Caco-2 (cell line): ENCODE measurements at regions of chr2 and their contacts with region 1.

Region 1: DNA sequence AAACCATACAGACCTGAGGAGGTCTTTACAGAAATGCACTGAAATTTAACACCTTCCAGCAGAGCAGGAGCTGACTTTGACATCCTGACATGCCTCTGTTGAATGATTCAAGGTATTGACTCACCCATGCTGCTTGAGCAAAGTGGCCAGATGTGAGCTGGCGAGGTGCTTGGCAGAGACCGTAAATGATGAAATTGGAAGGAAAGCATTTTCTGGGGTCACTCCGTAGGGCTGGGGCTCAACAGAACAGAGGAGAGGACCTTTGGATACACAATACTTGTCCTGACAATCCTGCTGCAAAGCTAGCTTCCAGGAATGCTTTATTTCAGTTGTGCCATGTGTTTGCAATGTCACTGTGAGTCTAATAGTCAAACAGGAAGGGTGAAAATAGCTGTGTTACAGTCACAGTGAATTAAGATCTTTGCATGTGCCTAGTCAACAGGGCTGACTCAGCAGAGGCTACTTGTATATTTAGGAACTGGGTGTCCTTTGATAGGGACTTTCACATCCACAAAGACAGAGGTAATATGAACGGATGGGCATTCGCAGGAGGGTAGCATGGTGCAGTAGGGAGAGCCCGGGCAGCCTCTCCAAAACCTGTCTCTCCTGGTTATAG is 31.6 kb upstream of the NCK2 start:
- DNase-seq: peak in 1 of 2 experiments; percentile 18
- H3K4me3 ChIP-seq: no peak overlapping the region
- H3K4me3 Mint-ChIP-seq: peak overlapping the region; percentile 36
- H3K27ac Mint-ChIP-seq: peak overlapping the region; percentile 75
- H3K4me1 ChIP-seq: peaks cover 49% of the 10 kb centered on the region
- H3K4me1 Mint-ChIP-seq: peaks cover 61% of the 10 kb centered on the region
- H3K27me3 ChIP-seq: no peaks in the 10 kb centered on the region
- H3K27me3 Mint-ChIP-seq: no peaks in the 10 kb centered on the region
- CTCF ChIP-seq: no peak

Region 2: DNA sequence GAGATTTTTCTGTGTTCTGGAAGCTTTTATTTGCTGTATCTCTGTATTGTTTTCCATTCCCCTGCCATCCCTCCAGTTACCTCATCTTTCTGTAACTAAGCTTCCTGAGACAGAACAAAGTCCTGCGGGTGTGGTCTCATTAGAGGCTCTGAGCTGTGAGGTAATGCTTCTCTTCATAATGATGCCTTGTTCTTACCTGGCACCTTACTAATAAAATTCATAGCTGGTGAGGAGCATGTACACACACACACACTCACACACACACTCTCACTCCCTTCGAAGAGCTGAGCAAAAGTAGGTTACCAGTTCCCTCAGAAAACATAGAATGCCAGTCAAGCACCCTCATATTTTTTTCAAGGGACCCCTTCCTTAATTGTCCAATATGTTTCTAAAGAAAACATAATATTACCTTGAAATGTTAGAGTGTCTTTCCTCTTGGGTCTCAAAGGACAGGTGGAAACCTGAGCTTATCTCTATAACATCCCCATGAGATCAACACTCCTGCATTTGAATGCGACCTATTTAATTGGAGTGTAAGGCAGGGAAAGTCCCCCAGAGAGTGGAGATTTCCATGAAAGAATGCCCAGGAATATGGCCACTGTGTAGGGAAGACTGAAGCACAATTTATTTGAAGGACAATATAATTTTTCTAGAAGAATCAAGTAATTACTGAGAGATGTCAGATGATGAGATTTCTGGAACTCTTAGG is 130.0 kb before region 1 on chr2:
- CTCF ChIA-PET with region 1: no interaction called
- POLR2A ChIA-PET with region 1: no interaction called
- intact Hi-C with region 1: loop called (anchors 2 kb)
- DNase-seq: peak; percentile 32 to 58
- H3K4me3 ChIP-seq: no peak overlapping the region
- H3K4me3 Mint-ChIP-seq: no peak overlapping the region
- H3K27ac Mint-ChIP-seq: peak overlapping the region; percentile 61
- H3K4me1 ChIP-seq: peaks cover 42% of the 10 kb centered on the region
- H3K4me1 Mint-ChIP-seq: peaks cover 30% of the 10 kb centered on the region
- H3K27me3 ChIP-seq: no peaks in the 10 kb centered on the region
- H3K27me3 Mint-ChIP-seq: no peaks in the 10 kb centered on the region
- CTCF ChIP-seq: no peak

Region 3: DNA sequence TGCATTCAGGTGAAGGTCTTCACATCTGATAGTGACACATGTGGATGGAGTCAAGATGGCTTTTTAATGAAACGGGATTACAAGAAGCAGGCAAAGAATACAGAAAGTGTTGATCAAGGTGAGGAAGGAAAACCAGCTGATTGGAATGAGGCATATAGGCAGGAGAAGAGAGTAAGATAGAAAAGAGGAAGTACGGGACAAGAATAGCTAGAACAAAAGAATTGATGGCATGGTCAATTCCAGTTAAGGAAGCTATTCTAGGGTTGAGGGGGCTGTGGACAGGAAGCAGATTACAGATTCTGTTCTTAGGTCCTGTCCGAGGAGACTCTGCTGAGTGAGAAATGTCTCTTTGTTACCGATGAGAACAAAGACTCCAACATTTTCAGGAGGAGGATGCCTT is 18.4 kb after region 1 on chr2:
- CTCF ChIA-PET with region 1: interaction called, 3 read pairs
- POLR2A ChIA-PET with region 1: interaction called, 4 read pairs
- intact Hi-C with region 1: loop called (anchors 1 kb)
- DNase-seq: no peak
- H3K4me3 ChIP-seq: no peak overlapping the region
- H3K4me3 Mint-ChIP-seq: no peak overlapping the region
- H3K27ac Mint-ChIP-seq: peak overlapping the region; percentile 18
- H3K4me1 ChIP-seq: peaks cover 23% of the 10 kb centered on the region
- H3K4me1 Mint-ChIP-seq: peaks cover 32% of the 10 kb centered on the region
- H3K27me3 ChIP-seq: no peaks in the 10 kb centered on the region
- H3K27me3 Mint-ChIP-seq: no peaks in the 10 kb centered on the region
- CTCF ChIP-seq: no peak